ENCODE measurements at regions of chrX and their contacts with region 1.

Region 1: DNA sequence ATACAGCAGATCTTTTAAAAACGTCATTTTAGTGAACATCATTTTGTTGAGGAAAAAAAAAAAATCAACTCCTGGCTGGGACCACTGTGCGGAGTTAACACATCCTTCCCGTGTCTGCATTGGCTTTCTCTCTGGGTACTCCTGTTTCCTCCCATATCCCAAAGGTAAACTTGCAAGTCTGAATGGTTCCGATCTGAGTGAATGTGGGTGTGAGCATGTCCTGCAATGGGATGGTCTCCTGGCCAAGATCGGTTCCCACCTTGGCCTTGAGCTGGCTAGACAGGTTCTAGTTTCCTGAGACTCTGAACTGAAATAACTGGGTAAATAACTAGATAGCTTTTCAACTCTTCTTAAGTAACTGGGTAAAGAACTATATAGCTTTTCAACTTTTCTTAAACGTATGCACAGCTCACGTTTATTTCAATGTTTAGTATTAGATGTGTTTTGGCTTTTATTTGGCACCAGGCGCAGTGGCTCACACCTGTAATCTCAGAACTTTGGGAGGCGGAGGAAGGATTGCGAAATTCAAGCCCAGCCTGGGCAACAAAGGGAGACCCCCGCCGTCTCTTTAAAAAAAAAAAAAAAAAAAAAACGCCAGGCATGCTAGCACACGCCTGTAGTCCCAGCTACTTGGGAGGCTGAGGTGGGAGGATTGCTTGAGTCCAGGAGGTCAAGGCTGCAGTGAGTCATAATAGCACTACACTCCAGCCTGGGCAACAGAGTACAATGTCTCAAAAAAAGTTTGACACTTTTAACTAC is 14.0 kb downstream of the RBMX start:
- DNase-seq: no peak
- ATAC-seq: peak in 6 of 8 donors; percentile 11 to 67 (median 40)
- H3K4me3 ChIP-seq: no peak overlapping the region
- H3K27ac ChIP-seq: peak overlapping the region in 4 of 10 donors; percentile 3 to 48 (median 20)
- H3K4me1 ChIP-seq: peaks cover 0 to 42% (median 13%) of the 10 kb centered on the region in 9 donors
- H3K27me3 ChIP-seq: no peaks in the 10 kb centered on the region
- CTCF ChIP-seq: no peak

Region 2: DNA sequence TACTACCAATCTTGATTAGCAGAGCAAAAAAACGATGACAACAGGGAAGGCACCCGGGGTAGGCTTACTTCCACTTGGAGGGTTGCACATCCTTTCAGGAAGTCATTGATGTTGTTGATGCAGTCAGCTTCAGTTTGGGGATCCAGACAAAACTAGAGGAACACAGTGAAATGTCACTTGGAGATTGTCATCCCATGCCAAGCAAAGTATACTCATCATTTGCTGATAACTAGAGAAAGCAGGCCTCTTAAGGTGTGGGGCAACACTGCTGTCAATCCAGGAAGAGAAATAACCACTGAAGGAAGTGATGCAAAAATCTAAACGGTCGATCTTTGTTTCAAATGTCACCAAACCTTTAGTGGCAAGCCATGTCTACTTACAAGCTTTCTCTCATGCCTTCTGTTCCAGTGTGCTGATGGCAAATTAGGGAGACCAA is 87.2 kb before region 1 on chrX:
- intact Hi-C with region 1: loop called in 1 of 10 experiments (anchors 10 kb)
- DNase-seq: no peak
- ATAC-seq: peak in 4 of 8 donors; percentile 33 to 47 (median 38)
- H3K4me3 ChIP-seq: peak overlapping the region in 9 of 10 donors; percentile 10 to 53 (median 47)
- H3K27ac ChIP-seq: peak overlapping the region in 9 of 10 donors; percentile 32 to 86 (median 71)
- H3K4me1 ChIP-seq: peaks cover 0 to 24% (median 7%) of the 10 kb centered on the region in 9 donors
- H3K27me3 ChIP-seq: no peaks in the 10 kb centered on the region
- CTCF ChIP-seq: no peak